ENCODE measurements at regions of chr1 and their contacts with region 1.

Region 1: DNA sequence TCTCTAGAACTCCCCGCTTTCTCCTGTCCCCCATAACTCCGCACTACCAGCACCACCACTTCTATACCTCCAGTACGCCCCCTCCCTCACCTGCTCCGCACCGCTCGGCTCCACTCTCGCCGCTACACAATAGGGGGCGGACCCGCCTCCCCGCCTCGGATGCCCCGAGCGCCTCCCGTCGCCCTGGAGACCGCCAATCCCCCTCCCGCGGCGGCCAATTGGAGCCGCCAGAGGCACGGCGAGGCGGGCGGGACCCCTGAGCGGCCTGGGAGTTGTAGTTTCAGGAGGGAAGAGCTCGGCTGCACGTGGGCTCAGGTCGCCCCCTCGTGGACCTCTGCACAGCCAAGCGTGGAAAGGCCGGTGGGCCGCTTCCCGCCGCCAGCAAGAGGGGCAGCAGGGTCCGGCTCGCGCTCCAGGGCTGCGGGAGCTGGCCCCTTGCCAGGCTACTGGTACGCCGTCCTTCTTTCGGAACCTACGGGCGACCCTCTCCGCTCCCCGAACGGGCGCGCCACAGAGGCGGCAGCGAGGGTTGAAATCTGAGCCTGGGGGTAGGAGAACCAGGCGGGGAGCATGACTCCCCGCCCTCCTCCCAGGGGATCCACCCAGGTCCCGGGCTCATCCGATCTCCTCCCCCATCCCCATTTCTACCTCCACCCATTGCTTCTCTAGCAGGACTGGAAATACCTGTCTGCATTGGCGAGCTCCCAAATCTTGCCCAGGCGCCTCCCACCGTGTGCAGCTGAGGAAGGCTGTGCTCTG is at the start of gene IGSF9:
- DNase-seq: peak in 1 of 2 donors; percentile 89
- H3K4me3 ChIP-seq: peak within 1 kb of the TSS; percentile 51 to 58
- H3K27ac ChIP-seq: no peak within 1 kb of the TSS
- H3K4me1 ChIP-seq: peaks cover 0 to 11% of the 10 kb centered on the region in 2 donors
- H3K27me3 ChIP-seq: no peaks in the 10 kb centered on the region
- CTCF ChIP-seq: peak; percentile 45 to 73 (median 64)
- total RNA-seq, gene IGSF9: 0.11 TPM

Region 2: DNA sequence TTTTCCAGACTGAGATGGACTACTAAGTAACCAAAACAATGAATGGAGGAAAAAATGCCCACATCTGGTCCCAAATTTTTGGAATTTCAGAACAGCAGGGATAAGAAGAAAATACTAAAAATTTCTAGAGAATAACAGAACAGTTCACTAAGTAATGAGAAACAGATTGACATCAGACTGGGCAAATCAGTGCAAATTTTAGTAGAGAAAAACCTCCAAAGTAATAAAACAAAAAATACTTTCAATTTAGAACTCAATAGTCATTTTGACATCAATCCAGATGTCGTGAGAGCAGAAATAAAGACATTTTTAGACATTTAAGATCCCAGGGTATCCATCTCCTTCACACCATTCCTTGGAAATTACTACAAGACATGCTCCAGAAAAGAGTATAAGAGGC is 270.6 kb before region 1 on chr1:
- intact Hi-C with region 1: no loop called
- DNase-seq: no peak
- H3K4me3 ChIP-seq: no peak overlapping the region
- H3K27ac ChIP-seq: no peak overlapping the region
- H3K4me1 ChIP-seq: no peaks in the 10 kb centered on the region
- H3K27me3 ChIP-seq: no peaks in the 10 kb centered on the region
- CTCF ChIP-seq: no peak

Region 3: DNA sequence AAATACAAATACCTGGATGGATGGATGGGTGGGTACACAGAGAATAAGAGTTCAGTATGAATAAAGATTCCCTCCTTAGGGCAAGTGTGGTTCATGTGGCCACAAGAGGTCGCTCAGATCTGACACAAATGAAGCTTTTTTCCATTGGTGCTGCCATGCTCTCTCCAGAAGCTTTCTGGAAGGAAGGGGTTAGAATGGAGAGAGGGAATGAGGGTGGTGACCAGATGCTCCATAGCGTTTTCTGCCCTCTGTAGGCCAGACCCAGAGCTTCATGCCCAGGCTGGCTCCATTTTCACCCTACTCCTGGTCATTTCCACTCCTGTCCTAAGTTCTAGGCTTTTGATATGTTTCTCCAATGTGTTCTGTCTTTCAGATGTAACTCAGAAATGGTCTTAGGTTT is 146.8 kb before region 1 on chr1:
- intact Hi-C with region 1: loop called (anchors 5 kb)
- DNase-seq: peak in 1 of 2 donors; percentile 75
- H3K4me3 ChIP-seq: no peak overlapping the region
- H3K27ac ChIP-seq: no peak overlapping the region
- H3K4me1 ChIP-seq: no peaks in the 10 kb centered on the region
- H3K27me3 ChIP-seq: no peaks in the 10 kb centered on the region
- CTCF ChIP-seq: peak; percentile 67 to 77 (median 69)